ENCODE measurements at regions of chr1 and their contacts with region 1.

Region 1: DNA sequence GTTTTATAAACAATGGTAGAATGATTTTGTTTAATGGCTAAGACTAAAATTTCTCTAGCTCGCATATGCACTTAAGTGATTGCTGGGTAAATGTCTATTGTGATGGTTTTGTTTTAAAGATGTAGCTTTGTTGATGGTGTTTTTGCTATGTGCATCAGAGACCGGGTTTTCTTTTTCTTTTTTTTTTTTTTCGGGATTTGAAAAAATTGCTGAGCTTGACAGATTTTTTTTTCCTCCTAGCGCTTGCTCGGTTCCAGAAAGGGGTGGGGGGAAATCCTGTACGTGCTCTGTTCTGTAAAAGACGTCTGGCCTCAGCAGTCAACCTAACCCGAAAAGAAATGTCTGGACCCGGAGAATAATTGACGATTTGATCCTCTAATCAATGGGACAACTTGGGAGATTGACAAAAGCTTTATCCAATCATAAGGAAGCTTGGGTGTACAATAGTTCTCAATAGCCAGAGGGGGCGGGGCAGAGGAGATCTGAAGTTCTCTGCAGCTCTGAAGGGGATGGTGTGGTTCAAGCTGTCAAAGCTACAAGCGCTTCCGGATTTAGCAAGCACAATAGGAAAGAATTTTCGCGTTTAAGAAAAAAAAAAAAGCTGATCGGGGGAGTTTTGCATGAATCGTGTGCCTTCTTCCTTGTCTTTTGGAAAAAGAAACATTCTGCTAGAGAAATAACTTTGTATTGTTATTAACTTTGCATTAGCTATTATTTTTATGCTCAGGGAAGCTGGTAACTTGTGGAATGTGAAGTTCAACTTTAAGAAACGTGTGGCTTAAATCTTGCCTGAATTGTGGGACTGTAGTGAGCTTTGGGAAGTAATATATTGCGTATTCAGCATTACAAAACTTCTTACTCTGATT is 4.5 kb upstream of the NFIA start:
- DNase-seq: peak; percentile 73 to 97 (median 90)

Region 2: GRCh38 chr1:60904089-60904851 is 173.6 kb before region 1 on chr1:
- intact Hi-C with region 1: no loop called
- DNase-seq: peak in 24 of 42 donors; percentile 14 to 78 (median 47)

Region 3: DNA sequence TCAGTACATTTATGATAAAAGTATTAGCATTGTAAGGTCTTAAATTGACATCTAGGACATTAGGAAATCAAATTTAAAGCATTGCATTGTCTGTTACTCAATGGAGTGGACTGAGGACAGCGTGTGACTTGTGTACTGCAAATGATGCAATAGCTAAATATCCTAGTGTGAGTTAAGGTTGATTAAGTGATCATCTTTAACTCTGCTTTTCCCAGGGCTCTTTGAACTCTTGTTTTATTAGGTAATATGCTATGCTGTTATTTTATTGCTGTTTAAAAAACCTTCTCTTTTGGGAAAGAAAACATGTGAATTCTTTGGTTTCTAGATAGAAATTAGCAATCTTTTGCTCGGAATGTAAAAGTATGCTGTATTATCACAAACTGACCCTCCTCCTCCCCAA is 43.1 kb after region 1 on chr1:
- intact Hi-C with region 1: loop called (anchors 5 kb)
- DNase-seq: peak in 1 of 42 donors; percentile 32

Region 4: GRCh38 chr1:61184040-61184713 is 106.3 kb after region 1 on chr1:
- intact Hi-C with region 1: loop called (anchors 2 kb)
- DNase-seq: peak; percentile 76 to 98 (median 93)

Region 5: DNA sequence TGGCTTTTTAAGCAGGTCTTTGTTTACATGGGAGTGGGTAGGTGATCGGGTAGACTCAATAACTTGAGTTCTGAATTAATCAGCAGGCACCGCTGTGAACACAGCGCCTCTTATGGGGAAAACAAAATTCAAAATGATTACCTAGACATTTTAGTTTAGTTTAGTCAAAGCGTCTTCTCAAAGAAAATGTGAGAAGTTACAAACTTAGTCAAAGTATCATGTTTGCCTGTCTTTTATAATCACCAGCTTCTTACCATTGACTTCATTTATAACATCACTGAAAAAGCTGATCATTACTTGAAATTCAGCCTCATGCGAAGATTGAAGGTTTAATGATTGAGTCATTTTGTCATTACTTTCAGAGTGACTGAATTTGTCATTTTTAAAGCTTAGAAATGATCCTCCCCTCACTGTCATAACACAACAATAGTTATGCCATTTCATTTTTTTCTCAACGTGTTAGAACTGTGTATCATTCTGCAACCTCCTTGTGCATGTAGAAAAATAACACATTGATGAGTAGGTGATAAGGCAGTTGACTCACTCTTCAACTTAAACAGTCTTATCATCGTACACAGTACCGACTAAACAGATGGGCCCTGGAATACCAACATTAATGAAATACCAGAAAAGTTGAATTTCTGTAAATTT is 193.0 kb after region 1 on chr1:
- intact Hi-C with region 1: loop called (anchors 10 kb)
- DNase-seq: no peak